ENCODE measurements at regions of chr1 and their contacts with region 1.

Region 1: GRCh38 chr1:228471762-228472398 is 15.3 kb upstream of the RNF187 start:
- DNase-seq: no peak
- H3K4me3 ChIP-seq: no peak overlapping the region
- H3K27ac ChIP-seq: no peak overlapping the region
- H3K4me1 ChIP-seq: peaks cover 3 to 22% (median 15%) of the 10 kb centered on the region in 4 experiments; a peak in 6 of 7 replicates
- H3K27me3 ChIP-seq: peaks cover 2 to 28% (median 15%) of the 10 kb centered on the region in 4 experiments
- CTCF ChIP-seq: peak in 2 of 3 experiments; percentile 64 to 68; a peak in 3 of 4 replicates
- EP300 ChIP-seq: no peak
- POLR2A ChIP-seq: no peak
- RAD21 ChIP-seq: peak; percentile 50 to 70

Region 2: GRCh38 chr1:228500901-228501871 is 29.3 kb after region 1 on chr1:
- CTCF ChIA-PET with region 1: interaction called, 15 read pairs
- POLR2A ChIA-PET with region 1: interaction called, 4 read pairs
- DNase-seq: peak; percentile 61 to 92
- H3K4me3 ChIP-seq: peak overlapping the region in 1 of 4 experiments; percentile 17; a peak in 1 of 8 replicates
- H3K27ac ChIP-seq: no peak overlapping the region
- H3K4me1 ChIP-seq: peaks cover 0 to 4% (median 2%) of the 10 kb centered on the region in 4 experiments; a peak in 4 of 7 replicates
- H3K27me3 ChIP-seq: peaks cover 0 to 24% (median 18%) of the 10 kb centered on the region in 4 experiments; a peak in 6 of 7 replicates
- CTCF ChIP-seq: peak; percentile 84 to 95 (median 89)
- EP300 ChIP-seq: no peak
- POLR2A ChIP-seq: no peak
- RAD21 ChIP-seq: peak; percentile 82